Gastrocnemius medialis (tissue), 4 donors: ENCODE measurements at regions of chr16 and their contacts with region 1.

Region 1: GRCh38 chr16:75464130-75464918 is at the start of gene TMEM170A:
- DNase-seq: peak; percentile 99
- ATAC-seq: peak; percentile 98 to 99
- H3K4me3 ChIP-seq: peak within 1 kb of the TSS; percentile 74 to 95 (median 82)
- H3K27ac ChIP-seq: peak within 1 kb of the TSS; percentile 90 to 96 (median 94)
- H3K4me1 ChIP-seq: peaks cover 0 to 14% of the 10 kb centered on the region in 2 donors
- H3K27me3 ChIP-seq: no peaks in the 10 kb centered on the region
- CTCF ChIP-seq: peak; percentile 100
- POLR2A ChIP-seq: peak; percentile 95 to 97
- total RNA-seq, gene TMEM170A: 7.9 to 9.8 (median 8.6) TPM

Region 2: DNA sequence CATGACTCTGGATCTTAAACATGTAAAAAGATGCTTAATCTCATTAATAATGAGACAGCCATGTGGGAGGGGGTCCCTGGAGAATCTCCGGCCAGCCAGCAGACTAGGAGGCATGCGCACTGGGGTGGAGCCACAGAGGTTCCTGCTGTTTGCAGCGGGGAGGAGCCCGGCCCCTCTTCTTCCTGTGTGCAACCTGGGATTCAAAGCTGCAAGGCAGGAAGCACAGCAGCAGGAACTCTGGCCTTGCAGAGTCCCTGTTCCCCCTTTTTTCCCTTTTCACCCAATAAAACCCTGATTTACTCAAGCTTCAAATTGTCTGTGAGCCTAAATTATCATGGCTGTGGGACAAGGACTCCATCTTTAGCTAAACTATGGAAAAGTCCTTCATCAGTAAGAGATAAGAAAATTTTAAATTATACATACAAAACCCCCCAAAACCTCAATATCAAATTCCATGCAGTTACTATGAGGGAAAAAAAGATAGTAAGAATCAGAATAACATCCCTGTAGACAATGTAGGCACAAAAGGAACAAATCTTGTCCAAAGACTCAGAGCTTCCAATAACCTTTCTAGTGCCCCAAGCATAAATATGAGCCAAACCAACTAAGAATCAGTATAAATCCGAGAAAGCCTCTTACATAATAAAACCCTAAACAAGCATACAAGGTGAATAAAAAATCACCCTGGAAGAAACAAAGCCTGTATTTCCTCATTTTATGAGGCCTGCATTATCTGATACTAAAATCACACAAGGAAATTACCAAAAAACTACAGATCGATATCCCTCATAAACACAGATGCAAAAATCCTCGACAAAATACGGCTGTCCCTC is 43.1 kb before region 1 on chr16:
- in situ Hi-C with region 1: no loop called
- intact Hi-C with region 1: no loop called
- DNase-seq: no peak
- ATAC-seq: no peak
- H3K4me3 ChIP-seq: no peak overlapping the region
- H3K27ac ChIP-seq: no peak overlapping the region
- H3K4me1 ChIP-seq: peaks cover 16 to 24% of the 10 kb centered on the region in 2 donors
- H3K27me3 ChIP-seq: no peaks in the 10 kb centered on the region
- CTCF ChIP-seq: no peak
- POLR2A ChIP-seq: no peak

Region 3: GRCh38 chr16:75432828-75433731 is 31.2 kb before region 1 on chr16 and contains the start of gene CFDP1:
- in situ Hi-C with region 1: no loop called
- intact Hi-C with region 1: loop called (anchors 1 kb)
- DNase-seq: peak; percentile 93 to 94
- ATAC-seq: peak; percentile 93 to 96
- H3K4me3 ChIP-seq: peak within 1 kb of the TSS; percentile 88 to 100 (median 95)
- H3K27ac ChIP-seq: peak within 1 kb of the TSS; percentile 80 to 99 (median 96)
- H3K4me1 ChIP-seq: peaks cover 15 to 17% of the 10 kb centered on the region in 2 donors
- H3K27me3 ChIP-seq: no peaks in the 10 kb centered on the region
- CTCF ChIP-seq: peak in 2 of 5 experiments; percentile 25 to 28
- POLR2A ChIP-seq: peak; percentile 71 to 78
- total RNA-seq, gene CFDP1: 20.4 to 28.6 (median 24.2) TPM

Region 4: DNA sequence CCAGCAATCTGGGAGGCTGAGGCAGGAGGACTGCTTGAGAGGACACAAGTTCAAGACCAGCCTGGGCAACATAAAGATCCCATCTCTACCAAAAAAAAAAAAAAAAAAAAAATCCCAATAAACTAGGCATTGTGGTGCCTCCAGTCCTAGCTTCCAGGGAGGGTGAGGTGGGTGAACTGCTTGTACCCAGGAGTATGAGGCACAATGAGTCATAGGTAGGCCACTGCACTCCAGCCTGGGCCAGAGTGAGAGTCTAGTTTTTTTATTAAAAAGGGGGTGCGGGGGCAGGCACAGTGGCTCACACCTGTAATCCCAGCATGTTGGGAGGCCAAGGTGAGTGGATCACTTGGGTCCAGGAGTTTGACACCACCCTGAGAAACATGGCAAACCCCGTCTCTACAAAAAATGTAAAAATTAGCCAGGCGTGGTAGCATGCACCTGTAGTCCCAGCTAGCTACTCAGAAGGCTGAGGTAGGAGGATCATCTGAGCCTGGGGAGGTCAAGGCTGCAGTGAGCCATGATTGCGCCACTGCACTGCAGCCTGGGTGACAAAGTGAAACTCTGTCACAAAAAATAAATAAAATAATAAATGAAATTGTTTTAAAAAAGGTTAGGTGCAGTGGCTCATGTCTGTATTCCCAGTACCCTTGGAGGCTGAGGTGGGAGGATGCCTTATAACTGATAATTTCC is 38.7 kb after region 1 on chr16:
- in situ Hi-C with region 1: no loop called
- intact Hi-C with region 1: no loop called
- DNase-seq: no peak
- ATAC-seq: no peak
- H3K4me3 ChIP-seq: no peak overlapping the region
- H3K27ac ChIP-seq: no peak overlapping the region
- H3K4me1 ChIP-seq: peaks cover 7 to 21% of the 10 kb centered on the region in 2 donors
- H3K27me3 ChIP-seq: no peaks in the 10 kb centered on the region
- CTCF ChIP-seq: no peak
- POLR2A ChIP-seq: no peak

Region 5: DNA sequence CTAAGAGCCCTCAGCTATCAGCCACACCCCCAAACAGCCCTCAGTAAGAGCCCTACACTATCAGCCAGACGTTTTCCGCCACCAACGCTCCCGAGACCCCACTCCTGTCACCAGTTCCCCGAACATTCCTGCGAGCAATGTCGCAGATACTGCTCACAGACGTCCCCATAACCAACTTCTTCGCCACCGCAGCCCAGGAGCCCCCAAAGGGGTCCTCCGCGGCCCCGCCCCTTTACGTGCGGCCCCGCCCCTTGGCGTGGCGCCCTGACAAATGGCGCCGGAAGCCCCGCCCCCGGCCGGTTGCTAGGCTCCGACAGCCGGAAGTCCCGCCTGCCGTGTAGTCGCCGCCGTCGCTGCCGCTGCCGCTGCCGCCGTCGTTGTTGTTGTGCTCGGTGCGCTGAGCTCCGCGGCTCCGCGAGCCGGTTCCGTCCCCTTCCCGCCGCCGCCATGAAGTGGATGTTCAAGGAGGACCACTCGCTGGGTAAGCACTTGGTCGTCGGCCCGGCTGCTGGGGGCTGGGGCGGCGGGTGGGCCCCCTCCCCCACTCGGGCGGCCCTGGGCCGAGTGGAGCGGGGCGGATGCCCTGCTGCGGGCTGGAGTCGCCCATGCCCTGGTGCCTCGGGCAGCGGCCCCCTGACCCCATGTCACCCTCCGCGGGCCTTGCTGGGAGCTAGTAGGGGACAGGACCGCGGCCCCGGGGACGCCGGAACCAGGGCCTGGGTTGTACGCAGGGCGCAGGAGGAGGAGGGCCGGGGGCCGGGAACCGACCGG is 101.9 kb after region 1 on chr16 and contains the start of gene GABARAPL2:
- in situ Hi-C with region 1: no loop called
- intact Hi-C with region 1: loop called (anchors 5 kb)
- DNase-seq: peak; percentile 51 to 65
- ATAC-seq: peak; percentile 91 to 95
- H3K4me3 ChIP-seq: peak within 1 kb of the TSS; percentile 89 to 98 (median 96)
- H3K27ac ChIP-seq: peak within 1 kb of the TSS; percentile 81 to 92 (median 86)
- H3K4me1 ChIP-seq: peaks cover 34 to 54% of the 10 kb centered on the region in 2 donors
- H3K27me3 ChIP-seq: no peaks in the 10 kb centered on the region
- CTCF ChIP-seq: no peak
- POLR2A ChIP-seq: peak; percentile 90 to 91
- total RNA-seq, gene GABARAPL2: 92.2 to 137 (median 117) TPM

Region 6: GRCh38 chr16:75647492-75648264 is 183.4 kb after region 1 on chr16 and contains the starts of genes KARS1 and TERF2IP:
- in situ Hi-C with region 1: loop called in 1 of 4 experiments (anchors 25 kb)
- intact Hi-C with region 1: loop called (anchors 2 kb)
- DNase-seq: peak; percentile 93 to 94
- ATAC-seq: peak; percentile 92
- H3K4me3 ChIP-seq: peak within 1 kb of the TSS; percentile 85 to 99 (median 92)
- H3K27ac ChIP-seq: peak within 1 kb of the TSS; percentile 95 to 98 (median 97)
- H3K4me1 ChIP-seq: peaks cover 58 to 59% of the 10 kb centered on the region in 2 donors
- H3K27me3 ChIP-seq: no peaks in the 10 kb centered on the region
- CTCF ChIP-seq: no peak
- POLR2A ChIP-seq: peak; percentile 97
- total RNA-seq, gene KARS1: 183 to 251 (median 206) TPM
- total RNA-seq, gene TERF2IP: 44.5 to 73.6 (median 69.7) TPM